HAP-1 (cell line): ENCODE measurements at regions of chr6 and their contacts with region 1.

Region 1: DNA sequence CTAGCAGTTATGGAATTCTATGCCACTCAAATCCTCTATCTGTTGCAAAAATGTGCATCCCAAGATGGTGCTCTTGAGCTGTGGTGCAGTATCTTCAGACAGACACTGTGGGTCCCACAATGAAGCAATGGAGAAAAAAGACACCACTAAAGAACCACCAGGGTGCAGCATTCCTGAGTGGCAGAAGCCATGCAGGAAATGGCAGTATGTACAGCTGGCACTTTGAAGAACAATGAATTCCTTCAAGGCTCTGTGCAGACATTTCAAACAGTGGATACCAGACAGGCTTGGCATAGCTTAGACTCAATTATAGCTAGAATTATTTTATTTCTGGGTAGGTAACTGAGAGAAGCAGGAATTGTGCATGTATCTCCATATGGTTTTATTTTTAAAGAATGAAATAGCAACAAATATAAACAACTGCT is 24.0 kb upstream of the HDAC2 start:
- DNase-seq: peak; percentile 81 to 93
- H3K4me3 ChIP-seq: no peak overlapping the region
- H3K4me1 ChIP-seq: peaks cover 10% of the 10 kb centered on the region
- H3K27me3 ChIP-seq: no peaks in the 10 kb centered on the region

Region 2: GRCh38 chr6:114304304-114304887 is 309.5 kb after region 1 on chr6:
- in situ Hi-C with region 1: loop called (anchors 25 kb)
- DNase-seq: no peak
- H3K4me3 ChIP-seq: no peak overlapping the region
- H3K4me1 ChIP-seq: no peaks in the 10 kb centered on the region
- H3K27me3 ChIP-seq: no peaks in the 10 kb centered on the region